Natural killer cell (primary cell): ENCODE measurements at regions of chr1 and their contacts with region 1.

Region 1: GRCh38 chr1:202135221-202135721 is 9.3 kb downstream of the ARL8A start:
- DNase-seq: peak; percentile 40 to 79
- ATAC-seq: peak; percentile 82 to 95 (median 90)
- H3K4me3 ChIP-seq: no peak overlapping the region
- H3K4me3 Mint-ChIP-seq: no peak overlapping the region
- H3K27ac ChIP-seq: no peak overlapping the region
- H3K27ac Mint-ChIP-seq: peak overlapping the region in 1 of 2 donors; percentile 14
- H3K4me1 ChIP-seq: no peaks in the 10 kb centered on the region
- H3K4me1 Mint-ChIP-seq: peaks cover 8 to 19% of the 10 kb centered on the region in 2 donors
- H3K27me3 ChIP-seq: no peaks in the 10 kb centered on the region
- H3K27me3 Mint-ChIP-seq: no peaks in the 10 kb centered on the region
- CTCF ChIP-seq: peak; percentile 86

Region 2: DNA sequence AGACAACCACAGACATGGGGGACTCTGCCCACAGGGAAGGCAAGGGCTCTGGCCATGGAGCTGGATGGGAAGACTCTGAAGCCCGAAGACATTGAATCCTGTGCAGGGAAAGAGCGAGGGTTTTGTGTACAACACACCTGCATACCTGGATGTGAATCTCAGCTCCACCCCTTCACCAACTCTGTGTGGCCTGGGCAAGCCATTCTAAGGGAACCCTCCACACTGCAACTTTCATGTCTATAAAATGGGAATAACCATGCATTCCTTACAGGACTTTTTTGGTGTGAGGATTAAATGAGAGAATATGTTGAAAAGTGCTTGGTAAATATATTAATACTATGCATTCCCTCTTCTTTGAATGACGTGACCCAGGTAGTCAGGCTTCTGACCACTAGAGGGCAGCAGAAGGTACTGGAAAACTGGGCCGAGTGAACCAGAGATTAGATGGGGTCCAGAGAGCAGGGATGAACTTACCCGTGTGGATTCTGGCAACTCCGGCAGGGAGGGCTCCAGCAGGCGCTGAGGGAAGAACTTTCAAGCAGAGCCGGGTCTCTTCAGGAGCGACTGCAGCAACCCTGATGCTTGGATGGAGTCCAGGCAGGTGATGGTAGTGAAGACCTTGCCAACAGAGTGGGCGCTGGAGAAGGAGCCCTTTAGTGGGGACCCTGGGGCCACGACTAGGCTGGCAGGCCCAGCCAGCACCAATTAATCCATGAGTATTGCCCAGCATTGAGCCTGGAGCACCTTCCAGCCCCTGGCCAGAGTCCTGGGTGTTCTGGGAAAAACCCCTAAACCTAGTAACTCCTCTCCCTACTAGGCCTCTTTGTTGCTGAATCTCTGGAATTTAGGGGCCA is 125.7 kb before region 1 on chr1:
- intact Hi-C with region 1: loop called (anchors 10 kb)
- DNase-seq: peak; percentile 35 to 78
- ATAC-seq: peak; percentile 64 to 80 (median 69)
- H3K4me3 ChIP-seq: no peak overlapping the region
- H3K4me3 Mint-ChIP-seq: no peak overlapping the region
- H3K27ac ChIP-seq: no peak overlapping the region
- H3K27ac Mint-ChIP-seq: no peak overlapping the region
- H3K4me1 ChIP-seq: peaks cover 4% of the 10 kb centered on the region
- H3K4me1 Mint-ChIP-seq: peaks cover 6 to 7% of the 10 kb centered on the region in 2 donors
- H3K27me3 ChIP-seq: no peaks in the 10 kb centered on the region
- H3K27me3 Mint-ChIP-seq: no peaks in the 10 kb centered on the region
- CTCF ChIP-seq: peak; percentile 91